ENCODE measurements at regions of chr15 and their contacts with region 1.

Region 1: DNA sequence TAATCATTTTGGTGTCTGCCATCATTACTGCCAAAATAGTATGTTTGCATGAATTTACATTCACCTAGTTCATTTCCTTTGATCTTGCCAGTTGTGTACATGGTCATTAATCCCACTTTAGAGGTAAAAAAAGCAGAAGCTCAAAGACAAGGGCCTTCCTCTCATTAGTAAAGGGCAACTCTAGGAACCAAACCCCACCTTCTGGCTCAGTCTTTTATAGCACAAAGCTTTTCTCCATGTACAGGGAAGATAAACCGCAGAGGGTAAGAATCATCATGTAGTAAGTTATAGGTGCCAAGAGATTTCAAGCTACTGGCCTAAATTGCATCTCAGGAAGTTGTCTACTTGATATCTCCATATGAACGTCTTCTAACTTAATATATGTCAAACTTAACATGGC is 19.3 kb upstream of the SPG21 start:
- DNase-seq: no peak
- ATAC-seq: no peak
- H3K4me3 ChIP-seq: no peak overlapping the region
- H3K27ac ChIP-seq: no peak overlapping the region
- H3K4me1 ChIP-seq: no peaks in the 10 kb centered on the region
- H3K27me3 ChIP-seq: no peaks in the 10 kb centered on the region
- CTCF ChIP-seq: no peak

Region 2: GRCh38 chr15:64970698-64971097 is 38.3 kb before region 1 on chr15:
- intact Hi-C with region 1: no loop called
- DNase-seq: peak in 1 of 2 donors; percentile 43
- ATAC-seq: no peak
- H3K4me3 ChIP-seq: no peak overlapping the region
- H3K27ac ChIP-seq: no peak overlapping the region
- H3K4me1 ChIP-seq: no peaks in the 10 kb centered on the region
- H3K27me3 ChIP-seq: no peaks in the 10 kb centered on the region
- CTCF ChIP-seq: no peak

Region 3: DNA sequence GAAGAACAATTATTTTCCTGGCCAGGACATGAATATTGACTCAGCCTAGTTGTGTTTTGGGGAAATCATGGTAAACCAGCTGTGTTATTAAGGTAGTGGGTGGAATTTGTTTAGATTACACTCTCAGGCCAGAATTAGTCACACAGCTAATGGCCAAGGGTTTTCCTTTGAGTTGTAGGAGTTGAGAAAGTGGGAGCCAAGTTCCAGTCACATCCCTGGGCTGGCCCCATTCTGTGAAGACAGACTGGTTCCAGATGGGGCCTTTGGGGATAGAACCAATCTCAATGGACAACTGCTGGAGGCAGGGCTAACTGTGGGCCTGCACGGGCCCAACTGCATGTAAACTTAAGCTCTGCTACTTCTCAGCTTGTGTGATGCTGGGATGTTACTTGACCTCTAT is 60.2 kb after region 1 on chr15:
- intact Hi-C with region 1: no loop called
- DNase-seq: peak in 1 of 2 donors; percentile 32
- ATAC-seq: peak in 3 of 4 donors; percentile 19 to 56 (median 23)
- H3K4me3 ChIP-seq: no peak overlapping the region
- H3K27ac ChIP-seq: peak overlapping the region; percentile 59
- H3K4me1 ChIP-seq: peaks cover 33% of the 10 kb centered on the region
- H3K27me3 ChIP-seq: peaks cover 0 to 5% (median 2%) of the 10 kb centered on the region in 3 donors
- CTCF ChIP-seq: no peak

Region 4: GRCh38 chr15:66483131-66483566 is 1474.2 kb after region 1 on chr15:
- intact Hi-C with region 1: loop called in 1 of 2 experiments (anchors 10 kb)
- DNase-seq: peak; percentile 34 to 56
- ATAC-seq: peak in 3 of 4 donors; percentile 73 to 82 (median 80)
- H3K4me3 ChIP-seq: no peak overlapping the region
- H3K27ac ChIP-seq: no peak overlapping the region
- H3K4me1 ChIP-seq: peaks cover 5% of the 10 kb centered on the region
- H3K27me3 ChIP-seq: no peaks in the 10 kb centered on the region
- CTCF ChIP-seq: no peak